Left cardiac atrium (tissue), 4 donors: ENCODE measurements at regions of chr3 and their contacts with region 1.

Region 1: DNA sequence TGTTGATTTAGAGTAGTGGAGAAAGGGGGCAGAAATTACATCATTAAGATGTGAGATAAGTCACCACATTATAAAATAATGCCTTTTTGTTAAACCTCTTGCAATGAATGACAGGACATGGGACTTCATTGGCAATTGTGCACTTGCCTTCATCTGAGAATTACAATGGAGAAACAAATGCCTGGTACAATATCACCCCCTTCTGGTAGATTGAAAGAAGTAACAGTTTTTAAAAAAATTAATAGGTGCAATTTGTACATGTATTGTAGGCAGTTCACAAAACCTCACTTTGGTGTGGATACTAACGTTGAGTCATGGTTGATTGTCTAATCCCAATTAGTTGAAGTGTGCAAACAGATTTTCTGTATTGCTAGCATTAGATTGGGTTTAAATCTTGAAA is 4.6 kb upstream of the P2RY14 start:
- DNase-seq: no peak
- ATAC-seq: peak; percentile 61 to 67

Region 2: DNA sequence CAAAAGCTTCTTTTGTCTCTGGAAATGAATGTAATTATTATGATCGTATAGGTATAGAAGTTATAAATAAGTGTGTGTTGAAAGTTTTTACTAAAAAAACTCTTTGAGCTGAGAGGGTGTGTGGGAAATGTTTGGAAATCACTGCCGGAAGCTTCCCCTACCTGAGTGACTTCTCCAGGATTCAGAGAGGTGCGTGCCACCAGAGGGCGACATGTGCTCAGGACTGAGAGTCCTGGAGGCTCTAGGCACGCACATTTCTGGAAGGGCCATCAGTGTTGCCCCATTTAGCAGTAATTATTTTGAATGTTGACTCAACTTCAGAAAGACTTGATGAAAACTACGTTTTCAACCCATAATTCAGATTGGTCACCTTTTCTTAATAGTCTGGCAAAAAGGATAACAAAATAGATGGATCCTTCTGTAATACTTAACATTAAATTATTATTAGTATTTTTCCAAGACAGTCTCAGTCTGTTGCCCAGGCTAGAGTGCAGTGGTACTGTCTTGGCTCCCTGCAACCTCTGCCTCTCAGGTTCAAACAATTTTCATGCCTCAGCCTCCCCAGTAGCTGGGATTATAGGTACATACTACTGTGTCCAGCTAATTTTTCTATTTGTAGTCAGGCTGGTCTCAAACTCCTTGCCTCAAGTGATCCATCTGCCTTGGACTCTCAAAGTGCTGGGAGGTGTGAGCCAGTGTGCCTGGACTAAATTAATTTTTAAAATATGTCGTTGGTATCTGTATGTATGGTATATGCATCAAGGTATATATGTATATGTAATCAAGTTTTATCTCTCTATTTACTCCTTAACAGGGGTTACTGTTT is 114.4 kb before region 1 on chr3:
- intact Hi-C with region 1: loop called (anchors 1 to 5 kb)
- DNase-seq: peak; percentile 82
- ATAC-seq: peak; percentile 78 to 82